ENCODE measurements at regions of chr4 and their contacts with region 1.

Region 1: DNA sequence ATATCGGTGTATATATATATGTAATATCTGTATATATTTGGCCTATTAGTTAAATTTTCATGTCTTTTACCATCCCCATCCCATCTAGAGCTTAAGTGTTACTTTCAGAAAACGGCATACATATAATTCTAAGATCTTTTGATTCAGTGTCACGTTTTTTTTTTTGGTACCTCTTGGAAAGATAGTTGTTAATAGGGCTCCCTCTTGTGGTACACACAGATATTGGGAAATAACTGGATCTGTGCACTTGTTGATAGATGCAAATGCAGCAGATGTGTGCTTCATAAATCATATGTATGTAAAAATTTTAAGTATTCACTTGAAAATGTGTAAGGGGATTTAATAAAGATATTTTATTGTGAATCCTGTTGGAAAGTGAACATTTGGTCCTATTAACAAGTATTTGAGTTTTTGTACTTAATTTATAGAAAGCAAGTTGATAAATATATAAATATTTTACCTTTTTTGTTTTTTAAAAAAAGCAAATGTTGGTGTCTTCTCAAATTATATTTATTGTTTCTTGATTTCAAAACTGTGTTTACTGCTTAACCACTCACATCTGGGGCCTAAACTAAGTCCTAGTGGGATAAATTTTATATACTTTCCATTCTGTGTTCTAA is 74.7 kb downstream of the PAQR3 start:
- DNase-seq: no peak
- H3K4me3 ChIP-seq: no peak overlapping the region
- H3K27ac ChIP-seq: no peak overlapping the region
- H3K4me1 ChIP-seq: peaks cover 0 to 3% (median 0%) of the 10 kb centered on the region in 4 donors
- H3K27me3 ChIP-seq: no peaks in the 10 kb centered on the region
- CTCF ChIP-seq: peak; percentile 43 to 77 (median 64)
- EP300 ChIP-seq: no peak
- POLR2A ChIP-seq: no peak

Region 2: GRCh38 chr4:78612398-78613178 is 251.9 kb before region 1 on chr4:
- intact Hi-C with region 1: loop called (anchors 2 kb)
- DNase-seq: no peak
- H3K4me3 ChIP-seq: no peak overlapping the region
- H3K27ac ChIP-seq: no peak overlapping the region
- H3K4me1 ChIP-seq: peaks cover 0 to 10% (median 0%) of the 10 kb centered on the region in 4 donors
- H3K27me3 ChIP-seq: no peaks in the 10 kb centered on the region
- CTCF ChIP-seq: peak; percentile 12 to 63 (median 37)
- EP300 ChIP-seq: no peak
- POLR2A ChIP-seq: no peak

Region 3: GRCh38 chr4:78644744-78645330 is 219.7 kb before region 1 on chr4:
- intact Hi-C with region 1: loop called (anchors 10 kb)
- DNase-seq: peak; percentile 76
- H3K4me3 ChIP-seq: no peak overlapping the region
- H3K27ac ChIP-seq: peak overlapping the region; percentile 79 to 83 (median 80)
- H3K4me1 ChIP-seq: peaks cover 0 to 23% (median 18%) of the 10 kb centered on the region in 4 donors
- H3K27me3 ChIP-seq: no peaks in the 10 kb centered on the region
- CTCF ChIP-seq: peak; percentile 84 to 99 (median 93)
- EP300 ChIP-seq: no peak
- POLR2A ChIP-seq: no peak

Region 4: GRCh38 chr4:78704981-78705683 is 159.4 kb before region 1 on chr4:
- intact Hi-C with region 1: no loop called
- DNase-seq: no peak
- H3K4me3 ChIP-seq: no peak overlapping the region
- H3K27ac ChIP-seq: no peak overlapping the region
- H3K4me1 ChIP-seq: no peaks in the 10 kb centered on the region
- H3K27me3 ChIP-seq: no peaks in the 10 kb centered on the region
- CTCF ChIP-seq: no peak
- EP300 ChIP-seq: no peak
- POLR2A ChIP-seq: no peak

Region 5: GRCh38 chr4:78775303-78776030 is 89.0 kb before region 1 on chr4:
- intact Hi-C with region 1: loop called (anchors 5 kb)
- DNase-seq: peak; percentile 94
- H3K4me3 ChIP-seq: peak overlapping the region; percentile 60 to 93 (median 82)
- H3K27ac ChIP-seq: peak overlapping the region; percentile 95 to 100 (median 97)
- H3K4me1 ChIP-seq: peaks cover 0 to 38% (median 16%) of the 10 kb centered on the region in 4 donors
- H3K27me3 ChIP-seq: no peaks in the 10 kb centered on the region
- CTCF ChIP-seq: no peak
- EP300 ChIP-seq: peak in 1 of 4 donors; percentile 4
- POLR2A ChIP-seq: peak; percentile 56 to 57